Body of pancreas (tissue), 4 donors: ENCODE measurements at regions of chr12 and their contacts with region 1.

Region 1: DNA sequence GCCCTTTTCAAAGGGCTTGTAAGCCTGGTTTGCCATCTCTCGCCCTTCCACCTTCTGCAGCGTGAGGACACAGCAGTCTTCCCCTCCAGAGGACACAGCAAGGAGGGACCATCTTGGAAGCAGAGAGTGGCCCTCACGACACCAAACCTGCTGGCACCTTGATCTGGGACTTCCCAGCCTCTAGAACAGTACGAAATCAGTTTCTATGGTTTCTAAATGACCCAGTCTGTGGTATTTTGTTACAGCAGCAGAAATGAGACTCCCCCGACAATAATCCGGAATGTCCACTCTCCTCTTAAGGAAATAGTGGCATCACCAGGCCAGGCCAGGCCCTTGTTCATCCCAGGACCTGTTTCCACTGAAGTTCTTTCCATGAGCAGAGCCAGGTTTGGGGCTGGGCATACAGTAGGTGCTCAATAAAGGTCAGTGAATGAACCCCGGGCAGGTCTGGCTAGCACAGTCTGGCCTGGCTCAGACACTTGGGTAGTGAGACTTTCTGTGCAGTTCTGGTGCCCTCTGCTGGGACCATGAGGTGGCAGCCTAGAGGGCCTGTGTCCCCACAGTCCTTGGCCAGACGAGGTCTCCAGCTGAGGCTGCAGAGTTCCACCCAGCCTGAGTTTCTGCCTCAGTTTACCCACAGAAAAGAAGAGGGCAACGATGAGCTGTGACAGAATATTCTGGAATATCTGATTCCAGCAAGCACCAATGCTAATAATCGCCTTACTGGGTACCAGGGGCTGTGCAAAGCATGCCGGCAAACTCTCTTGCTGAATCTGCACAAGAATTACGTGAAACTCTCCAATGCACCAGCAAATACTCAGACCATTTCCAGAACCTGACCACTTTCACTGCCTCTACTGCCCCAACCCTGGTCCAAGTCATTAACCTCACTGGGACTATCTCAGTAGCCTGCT is 14.0 kb downstream of the ABCB9 start:
- DNase-seq: peak; percentile 83 to 86 (median 84)
- ATAC-seq: peak; percentile 94
- H3K4me3 ChIP-seq: no peak overlapping the region
- H3K27ac ChIP-seq: no peak overlapping the region
- H3K4me1 ChIP-seq: peaks cover 2% of the 10 kb centered on the region
- H3K27me3 ChIP-seq: no peaks in the 10 kb centered on the region
- CTCF ChIP-seq: peak; percentile 87 to 94 (median 90)
- POLR2A ChIP-seq: no peak

Region 2: GRCh38 chr12:122788387-122788786 is 163.8 kb before region 1 on chr12:
- intact Hi-C with region 1: loop called (anchors 5 kb)
- DNase-seq: no peak
- ATAC-seq: no peak
- H3K4me3 ChIP-seq: no peak overlapping the region
- H3K27ac ChIP-seq: no peak overlapping the region
- H3K4me1 ChIP-seq: peaks cover under 1% of the 10 kb centered on the region
- H3K27me3 ChIP-seq: no peaks in the 10 kb centered on the region
- CTCF ChIP-seq: no peak
- POLR2A ChIP-seq: no peak

Region 3: DNA sequence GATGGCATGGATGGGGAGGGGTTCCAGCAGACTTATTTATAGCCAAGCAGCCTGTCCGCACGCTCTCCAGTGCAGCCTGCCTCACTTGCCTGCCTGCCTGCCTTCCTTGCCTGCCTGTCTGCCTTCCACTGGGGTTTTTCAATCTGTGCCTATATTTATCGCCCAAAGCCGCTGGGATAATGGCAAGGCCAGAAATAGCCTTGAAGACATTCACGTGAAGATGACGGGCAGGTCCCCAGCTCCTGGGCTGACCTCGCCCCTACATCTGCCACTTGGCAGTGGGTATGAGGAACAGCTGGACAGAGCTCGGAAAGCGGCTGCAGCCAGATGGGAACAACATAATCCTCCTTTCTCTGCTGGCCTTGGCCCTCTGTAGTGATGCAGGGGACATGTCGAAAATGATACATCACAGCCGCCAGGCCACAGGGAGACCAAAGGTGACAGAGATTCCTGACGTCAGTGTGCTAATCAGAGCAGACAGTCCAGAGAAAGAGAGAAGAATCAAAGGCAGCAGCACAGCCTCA is 145.4 kb after region 1 on chr12:
- intact Hi-C with region 1: no loop called
- DNase-seq: peak in 3 of 4 donors; percentile 24 to 39 (median 34)
- ATAC-seq: peak; percentile 36
- H3K4me3 ChIP-seq: no peak overlapping the region
- H3K27ac ChIP-seq: peak overlapping the region in 1 of 4 donors; percentile 12
- H3K4me1 ChIP-seq: peaks cover 16% of the 10 kb centered on the region
- H3K27me3 ChIP-seq: no peaks in the 10 kb centered on the region
- CTCF ChIP-seq: no peak
- POLR2A ChIP-seq: no peak